ENCODE measurements at regions of chr9 and their contacts with region 1.

Region 1: DNA sequence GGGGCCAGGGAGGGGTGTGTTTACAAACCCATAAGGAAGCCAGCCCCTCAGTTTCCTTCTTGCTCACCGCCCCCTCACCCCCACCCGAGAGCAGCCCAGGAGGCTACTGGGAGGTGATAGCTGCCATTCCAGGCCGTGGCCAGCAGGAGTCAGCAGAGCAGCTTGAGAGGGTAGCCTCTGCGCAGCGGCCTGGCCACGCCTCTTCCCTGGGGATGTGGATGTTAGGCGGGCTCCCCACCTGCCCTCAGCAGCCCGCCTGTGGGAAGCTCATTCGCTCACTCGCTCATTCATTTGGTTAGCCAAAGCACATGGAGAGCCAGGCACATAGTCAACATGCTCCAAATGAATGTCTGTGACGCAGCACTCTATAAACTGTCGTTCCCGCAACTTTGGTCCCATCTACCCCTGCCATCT is 6.1 kb upstream of the DPM2 start:
- DNase-seq: peak; percentile 85 to 94 (median 92)
- H3K4me3 ChIP-seq: peak overlapping the region in 2 of 7 experiments; percentile 23 to 55
- H3K27ac ChIP-seq: no peak overlapping the region
- H3K4me1 ChIP-seq: peaks cover 0 to 19% (median 12%) of the 10 kb centered on the region in 4 experiments
- H3K27me3 ChIP-seq: no peaks in the 10 kb centered on the region

Region 2: GRCh38 chr9:127450243-127450760 is 493.4 kb before region 1 on chr9:
- CTCF ChIA-PET with region 1: no interaction called
- POLR2A ChIA-PET with region 1: no interaction called
- DNase-seq: peak in 2 of 3 donors; percentile 39 to 60
- H3K4me3 ChIP-seq: peak overlapping the region; percentile 85 to 99 (median 92)
- H3K27ac ChIP-seq: peak overlapping the region; percentile 84 to 92
- H3K4me1 ChIP-seq: peaks cover 13 to 50% (median 34%) of the 10 kb centered on the region in 4 experiments
- H3K27me3 ChIP-seq: no peaks in the 10 kb centered on the region

Region 3: GRCh38 chr9:127905788-127906191 is 37.9 kb before region 1 on chr9:
- CTCF ChIA-PET with region 1: no interaction called
- POLR2A ChIA-PET with region 1: no interaction called
- DNase-seq: no peak
- H3K4me3 ChIP-seq: peak overlapping the region in 1 of 7 experiments; percentile 37
- H3K27ac ChIP-seq: peak overlapping the region; percentile 62 to 79
- H3K4me1 ChIP-seq: peaks cover 9 to 52% (median 44%) of the 10 kb centered on the region in 4 experiments
- H3K27me3 ChIP-seq: no peaks in the 10 kb centered on the region

Region 4: GRCh38 chr9:127955294-127956035 is 11.7 kb after region 1 on chr9:
- CTCF ChIA-PET with region 1: interaction called, 49 read pairs
- POLR2A ChIA-PET with region 1: no interaction called
- DNase-seq: peak; percentile 58 to 73 (median 70)
- H3K4me3 ChIP-seq: no peak overlapping the region
- H3K27ac ChIP-seq: no peak overlapping the region
- H3K4me1 ChIP-seq: peaks cover 0 to 9% (median 5%) of the 10 kb centered on the region in 4 experiments
- H3K27me3 ChIP-seq: no peaks in the 10 kb centered on the region

Region 5: GRCh38 chr9:127980706-127981558 is 37.2 kb after region 1 on chr9 and contains the start of gene EEIG1:
- CTCF ChIA-PET with region 1: interaction called, 21 read pairs
- POLR2A ChIA-PET with region 1: no interaction called
- DNase-seq: peak; percentile 91 to 95 (median 95)
- H3K4me3 ChIP-seq: peak within 1 kb of the TSS; percentile 67 to 83 (median 77)
- H3K27ac ChIP-seq: peak within 1 kb of the TSS; percentile 50 to 80
- H3K4me1 ChIP-seq: peaks cover 0 to 50% (median 36%) of the 10 kb centered on the region in 4 experiments
- H3K27me3 ChIP-seq: no peaks in the 10 kb centered on the region

Region 6: DNA sequence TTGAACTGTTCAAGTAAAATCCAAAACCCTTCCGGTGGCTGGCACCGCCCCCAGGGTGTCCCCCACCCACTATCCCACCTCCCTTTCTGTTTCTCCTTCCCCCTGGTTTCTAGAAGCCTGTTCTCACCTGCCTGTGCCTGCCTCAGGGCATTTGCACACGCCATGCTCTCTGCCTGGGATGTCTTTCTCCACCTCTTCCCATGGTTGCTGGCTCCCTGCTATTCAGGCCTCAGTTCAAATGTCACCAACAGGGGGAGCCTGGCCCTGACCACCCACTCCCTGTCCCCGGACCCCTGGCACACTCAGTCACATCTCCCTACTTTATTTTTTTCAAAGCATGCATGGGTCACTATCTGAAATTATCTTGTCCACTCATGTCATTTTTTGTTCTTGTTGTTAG is 77.0 kb after region 1 on chr9:
- CTCF ChIA-PET with region 1: interaction called, 245 read pairs
- POLR2A ChIA-PET with region 1: no interaction called
- DNase-seq: no peak
- H3K4me3 ChIP-seq: no peak overlapping the region
- H3K27ac ChIP-seq: no peak overlapping the region
- H3K4me1 ChIP-seq: peaks cover 0 to 18% (median 9%) of the 10 kb centered on the region in 4 experiments
- H3K27me3 ChIP-seq: no peaks in the 10 kb centered on the region

Region 7: DNA sequence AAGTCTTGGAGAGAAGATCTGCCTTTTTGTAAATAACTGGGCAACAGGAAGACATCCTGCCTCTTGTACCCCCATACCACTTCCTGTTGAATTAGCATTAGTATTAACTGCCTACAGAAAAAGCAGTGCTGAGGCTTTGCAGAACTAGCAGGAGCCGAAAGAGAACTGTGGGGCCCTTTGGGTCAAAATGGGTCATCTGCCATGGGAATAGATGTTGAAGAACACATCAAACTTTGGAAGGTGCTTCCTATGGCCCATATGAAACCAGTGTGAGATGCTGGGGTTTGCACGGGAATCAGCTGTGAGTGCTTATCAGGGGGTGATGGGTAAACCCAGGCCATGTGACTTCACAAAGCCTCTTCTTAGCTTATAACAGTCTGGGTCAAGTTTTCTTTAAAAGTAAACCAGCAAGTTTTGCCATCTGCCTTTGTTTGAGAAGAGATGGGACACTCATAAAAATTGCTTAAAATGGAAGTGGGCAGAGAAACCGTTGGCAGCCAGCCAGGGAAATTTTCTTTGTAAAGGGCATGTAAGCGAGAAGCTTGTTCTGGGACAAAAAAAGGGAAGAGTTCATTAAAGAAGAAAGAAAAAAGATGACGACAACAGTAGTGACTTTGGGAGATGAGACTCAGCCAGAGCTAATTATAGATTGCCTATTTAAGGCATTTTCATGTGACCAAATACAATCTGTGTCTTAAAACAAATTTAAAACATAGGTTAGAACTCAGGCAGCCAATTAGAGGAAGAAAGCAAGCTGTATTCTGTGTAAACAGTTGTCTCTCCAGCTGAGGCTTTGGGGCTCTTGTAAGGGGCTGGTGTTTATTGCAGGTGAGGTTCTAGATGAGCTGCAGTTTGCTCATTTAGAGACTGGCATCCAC is 128.6 kb after region 1 on chr9:
- CTCF ChIA-PET with region 1: interaction called, 12 read pairs
- POLR2A ChIA-PET with region 1: no interaction called
- DNase-seq: peak; percentile 79 to 88 (median 84)
- H3K4me3 ChIP-seq: peak overlapping the region in 6 of 7 experiments; percentile 2 to 61 (median 52)
- H3K27ac ChIP-seq: peak overlapping the region; percentile 37 to 71
- H3K4me1 ChIP-seq: peaks cover 28 to 56% (median 48%) of the 10 kb centered on the region in 4 experiments
- H3K27me3 ChIP-seq: no peaks in the 10 kb centered on the region

Region 8: DNA sequence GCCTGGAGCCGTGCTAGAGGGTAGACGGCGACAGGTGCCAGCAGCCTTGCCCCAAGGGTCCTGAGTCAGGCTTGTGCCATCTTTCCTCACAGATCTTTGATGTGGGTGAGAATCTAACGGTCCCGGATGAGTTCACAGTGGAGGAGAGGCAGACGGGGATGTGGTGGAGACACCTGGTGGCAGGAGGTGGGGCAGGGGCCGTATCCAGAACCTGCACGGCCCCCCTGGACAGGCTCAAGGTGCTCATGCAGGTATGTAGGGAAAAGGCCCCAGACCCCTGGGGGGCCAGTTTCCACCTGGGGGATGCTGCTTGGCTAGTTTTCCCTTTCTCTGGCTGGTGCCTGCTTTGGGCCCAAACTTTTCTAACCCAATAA is 159.8 kb after region 1 on chr9:
- CTCF ChIA-PET with region 1: interaction called, 21 read pairs
- POLR2A ChIA-PET with region 1: interaction called, 3 read pairs
- DNase-seq: no peak
- H3K4me3 ChIP-seq: no peak overlapping the region
- H3K27ac ChIP-seq: no peak overlapping the region
- H3K4me1 ChIP-seq: peaks cover 0 to 35% (median 29%) of the 10 kb centered on the region in 4 experiments
- H3K27me3 ChIP-seq: no peaks in the 10 kb centered on the region